Activated CD8-positive, alpha-beta T cell treated with anti-CD3 and anti-CD28 coated beads, Interleukin-2, amount 10 ng/mL, durations not matched to agents 7 days and 5 days (primary cell): ENCODE measurements at regions of chr17 and their contacts with region 1.

Region 1: GRCh38 chr17:43946069-43946696 is 3.9 kb upstream of the PPY start:
- DNase-seq: peak; percentile 40
- ATAC-seq: no peak
- H3K4me3 Mint-ChIP-seq: no peak overlapping the region
- H3K27ac Mint-ChIP-seq: no peak overlapping the region
- H3K4me1 Mint-ChIP-seq: peaks cover 13% of the 10 kb centered on the region
- H3K27me3 Mint-ChIP-seq: peaks cover 24% of the 10 kb centered on the region

Region 2: GRCh38 chr17:43907425-43907981 is 38.7 kb before region 1 on chr17 and contains the start of gene MPP2:
- CTCF ChIA-PET with region 1: interaction called, 36 read pairs
- POLR2A ChIA-PET with region 1: no interaction called
- DNase-seq: peak; percentile 50
- ATAC-seq: peak; percentile 50
- H3K4me3 Mint-ChIP-seq: peak within 1 kb of the TSS; percentile 27
- H3K27ac Mint-ChIP-seq: no peak within 1 kb of the TSS
- H3K4me1 Mint-ChIP-seq: peaks cover 13% of the 10 kb centered on the region
- H3K27me3 Mint-ChIP-seq: peaks cover 46% of the 10 kb centered on the region
- total RNA-seq, gene MPP2: 1.2 to 1.8 TPM

Region 3: DNA sequence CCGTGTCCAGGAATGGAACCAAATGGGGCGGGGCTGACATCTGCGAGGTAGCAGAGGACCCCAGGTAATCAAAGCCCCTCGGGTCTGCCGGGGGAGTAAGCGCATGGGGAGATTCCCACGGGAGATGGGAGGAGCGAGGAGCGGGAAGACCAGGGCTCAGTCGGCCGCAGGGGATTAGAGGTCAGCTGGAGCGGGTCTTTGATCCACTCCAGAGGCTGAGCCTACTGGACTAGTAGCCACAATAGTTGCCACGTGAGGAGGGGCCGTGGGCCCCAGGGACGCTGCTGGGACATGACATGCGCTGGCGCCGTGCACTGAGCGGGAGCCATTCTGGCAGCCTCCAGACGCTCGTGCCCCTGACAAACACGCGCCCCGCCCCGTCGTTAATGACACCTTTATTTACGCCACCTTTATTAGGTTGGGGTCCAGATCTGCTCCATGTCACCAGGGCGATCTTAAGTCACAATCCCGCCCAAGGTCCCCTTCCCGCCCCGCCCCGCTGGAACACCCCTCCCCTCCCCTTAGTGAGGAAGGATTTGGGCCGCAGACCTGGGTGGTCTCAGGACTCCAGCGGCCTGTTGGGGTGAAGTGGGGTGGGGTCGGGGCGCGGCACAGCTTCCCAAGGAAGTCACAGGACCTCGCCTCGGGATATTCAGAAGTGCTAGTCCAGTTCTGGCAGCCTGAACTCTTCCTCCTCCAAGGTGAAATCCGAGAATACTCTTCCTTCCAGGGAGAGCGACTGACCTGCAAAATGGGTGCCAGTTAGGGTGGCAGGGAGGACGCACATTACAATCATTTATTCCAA is 18.9 kb before region 1 on chr17:
- CTCF ChIA-PET with region 1: interaction called, 20 read pairs
- POLR2A ChIA-PET with region 1: no interaction called
- DNase-seq: no peak
- ATAC-seq: no peak
- H3K4me3 Mint-ChIP-seq: peak overlapping the region; percentile 60
- H3K27ac Mint-ChIP-seq: peak overlapping the region; percentile 76
- H3K4me1 Mint-ChIP-seq: peaks cover 33% of the 10 kb centered on the region
- H3K27me3 Mint-ChIP-seq: peaks cover 12% of the 10 kb centered on the region

Region 4: GRCh38 chr17:43958953-43959352 is 12.8 kb after region 1 on chr17:
- CTCF ChIA-PET with region 1: interaction called, 34 read pairs
- POLR2A ChIA-PET with region 1: interaction called, 3 read pairs
- DNase-seq: no peak
- ATAC-seq: no peak
- H3K4me3 Mint-ChIP-seq: no peak overlapping the region
- H3K27ac Mint-ChIP-seq: no peak overlapping the region
- H3K4me1 Mint-ChIP-seq: no peaks in the 10 kb centered on the region
- H3K27me3 Mint-ChIP-seq: peaks cover 9% of the 10 kb centered on the region

Region 5: GRCh38 chr17:44014437-44015172 is 68.4 kb after region 1 on chr17 and contains the start of gene TMEM101:
- CTCF ChIA-PET with region 1: interaction called, 13 read pairs
- POLR2A ChIA-PET with region 1: no interaction called
- DNase-seq: peak; percentile 94
- ATAC-seq: peak; percentile 98
- H3K4me3 Mint-ChIP-seq: peak within 1 kb of the TSS; percentile 100
- H3K27ac Mint-ChIP-seq: peak within 1 kb of the TSS; percentile 98
- H3K4me1 Mint-ChIP-seq: peaks cover 23% of the 10 kb centered on the region
- H3K27me3 Mint-ChIP-seq: no peaks in the 10 kb centered on the region
- total RNA-seq, gene TMEM101: 24.3 to 26.0 TPM

Region 6: GRCh38 chr17:44044067-44044466 is 97.9 kb after region 1 on chr17:
- CTCF ChIA-PET with region 1: interaction called, 102 read pairs
- POLR2A ChIA-PET with region 1: no interaction called
- DNase-seq: no peak
- ATAC-seq: no peak
- H3K4me3 Mint-ChIP-seq: no peak overlapping the region
- H3K27ac Mint-ChIP-seq: no peak overlapping the region
- H3K4me1 Mint-ChIP-seq: peaks cover 17% of the 10 kb centered on the region
- H3K27me3 Mint-ChIP-seq: no peaks in the 10 kb centered on the region

Region 7: GRCh38 chr17:44110823-44111633 is 164.8 kb after region 1 on chr17:
- CTCF ChIA-PET with region 1: interaction called, 15 read pairs
- POLR2A ChIA-PET with region 1: no interaction called
- DNase-seq: peak; percentile 84
- ATAC-seq: peak; percentile 78
- H3K4me3 Mint-ChIP-seq: peak overlapping the region; percentile 63
- H3K27ac Mint-ChIP-seq: peak overlapping the region; percentile 64
- H3K4me1 Mint-ChIP-seq: peaks cover 31% of the 10 kb centered on the region
- H3K27me3 Mint-ChIP-seq: no peaks in the 10 kb centered on the region